Left cardiac atrium (tissue), 4 donors: ENCODE measurements at regions of chr13 and their contacts with region 1.

Region 1: GRCh38 chr13:102913914-102914313 is 68.1 kb downstream of the ERCC5 start:
- DNase-seq: no peak
- ATAC-seq: no peak

Region 2: DNA sequence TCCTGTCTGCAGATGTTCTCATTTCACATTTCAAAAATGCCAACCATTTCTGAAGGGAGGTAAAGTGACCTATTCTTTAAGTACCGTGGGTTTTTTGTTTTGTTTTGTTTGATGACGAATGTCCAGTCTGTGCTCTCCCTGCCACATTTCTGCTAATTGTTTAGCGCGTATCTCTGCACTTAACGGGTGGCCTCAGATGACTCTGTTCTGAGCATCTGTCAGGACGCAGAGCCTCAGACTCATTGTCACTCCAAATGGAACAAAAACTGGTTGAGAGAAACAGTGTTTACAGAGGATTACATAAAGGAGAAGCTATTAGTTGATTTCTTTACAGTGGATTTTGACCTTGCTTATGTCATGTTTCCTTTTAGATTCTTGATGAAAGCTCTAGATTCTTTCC is 293.4 kb before region 1 on chr13:
- intact Hi-C with region 1: no loop called
- DNase-seq: no peak
- ATAC-seq: no peak

Region 3: DNA sequence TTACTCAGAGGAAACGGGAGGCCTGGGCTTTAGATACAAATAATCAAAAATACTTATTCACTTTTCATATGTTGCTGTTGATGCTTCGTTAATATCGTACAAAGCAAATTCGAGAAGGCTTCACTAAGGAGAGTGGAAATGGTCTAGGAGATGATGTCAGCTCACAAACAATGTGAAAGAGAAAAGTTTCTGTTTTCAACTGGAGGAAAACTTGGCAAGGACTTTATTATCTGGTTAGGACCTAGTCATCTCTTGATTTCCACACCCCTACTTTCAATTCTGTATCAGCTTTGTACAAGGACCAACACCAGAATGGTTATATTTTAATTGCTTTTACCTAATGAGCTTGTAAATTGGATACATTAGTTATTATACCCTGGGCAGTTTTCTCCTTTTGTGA is 64.3 kb after region 1 on chr13:
- intact Hi-C with region 1: no loop called
- DNase-seq: no peak
- ATAC-seq: peak in 1 of 2 donors; percentile 67

Region 4: GRCh38 chr13:103140001-103140671 is 226.2 kb after region 1 on chr13:
- intact Hi-C with region 1: loop called in 1 of 2 experiments (anchors 5 kb)
- DNase-seq: no peak
- ATAC-seq: peak; percentile 41 to 54

Region 5: GRCh38 chr13:103788061-103788652 is 874.2 kb after region 1 on chr13:
- intact Hi-C with region 1: loop called in 1 of 2 experiments (anchors 10 kb)
- DNase-seq: no peak
- ATAC-seq: peak in 1 of 2 donors; percentile 36